Ascending aorta (tissue), 2 donors: ENCODE measurements at regions of chr14 and their contacts with region 1.

Region 1: GRCh38 chr14:34982417-34983147 is at the start of gene SRP54:
- DNase-seq: peak; percentile 93 to 99
- H3K4me3 ChIP-seq: peak within 1 kb of the TSS; percentile 79 to 91
- H3K27ac ChIP-seq: peak within 1 kb of the TSS; percentile 94 to 99
- H3K4me1 ChIP-seq: peaks cover 0 to 37% of the 10 kb centered on the region in 2 donors
- H3K27me3 ChIP-seq: no peaks in the 10 kb centered on the region
- CTCF ChIP-seq: no peak
- total RNA-seq, gene SRP54: 87.7 TPM

Region 2: DNA sequence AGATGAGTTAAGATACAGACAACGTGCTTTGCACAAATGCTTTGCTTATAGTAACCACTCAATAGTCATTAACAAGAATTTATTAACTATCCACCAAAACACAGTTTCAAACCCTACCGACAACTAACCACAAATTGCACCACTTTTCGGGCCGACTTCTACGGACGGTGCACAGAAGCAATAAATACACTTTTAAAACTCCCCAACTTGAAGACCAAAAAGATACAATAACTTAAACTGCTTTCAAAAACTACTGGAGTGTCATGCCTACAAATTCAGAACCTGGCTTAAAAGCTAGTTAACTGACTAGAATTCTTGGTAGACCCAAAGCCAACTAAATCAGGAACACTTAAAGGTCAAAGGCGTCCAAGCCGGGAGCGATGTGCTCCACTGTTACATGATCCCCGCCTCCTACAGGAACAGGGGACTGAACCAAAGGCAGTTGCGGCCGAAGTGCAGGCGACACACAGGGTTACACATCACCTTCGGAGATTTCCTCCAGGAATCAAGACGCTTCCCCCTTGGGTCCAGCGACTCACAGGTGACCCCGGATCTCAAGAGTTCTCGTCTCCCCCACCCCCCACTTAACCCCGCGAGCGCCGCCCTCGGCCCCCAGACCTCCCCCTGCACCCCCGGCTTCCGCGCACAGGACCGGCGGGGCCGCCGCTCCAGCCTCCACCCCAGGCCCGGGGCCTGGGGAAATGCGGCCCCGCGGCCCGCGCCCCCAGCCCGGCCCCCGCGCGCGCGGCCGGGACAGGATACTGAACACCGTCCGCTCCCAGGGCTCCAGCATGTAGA is 521.0 kb before region 1 on chr14:
- intact Hi-C with region 1: loop called (anchors 2 kb)
- DNase-seq: peak in 1 of 2 donors; percentile 77
- H3K4me3 ChIP-seq: peak overlapping the region; percentile 80 to 86
- H3K27ac ChIP-seq: peak overlapping the region; percentile 76 to 94
- H3K4me1 ChIP-seq: peaks cover 0 to 7% of the 10 kb centered on the region in 2 donors
- H3K27me3 ChIP-seq: no peaks in the 10 kb centered on the region
- CTCF ChIP-seq: no peak

Region 3: GRCh38 chr14:34629657-34630529 is 352.7 kb before region 1 on chr14 and contains the start of gene SNX6:
- intact Hi-C with region 1: loop called (anchors 5 kb)
- DNase-seq: peak; percentile 46 to 92
- H3K4me3 ChIP-seq: peak within 1 kb of the TSS; percentile 85 to 96
- H3K27ac ChIP-seq: peak within 1 kb of the TSS; percentile 87 to 94
- H3K4me1 ChIP-seq: peaks cover 5 to 6% of the 10 kb centered on the region in 2 donors
- H3K27me3 ChIP-seq: no peaks in the 10 kb centered on the region
- CTCF ChIP-seq: no peak
- total RNA-seq, gene SNX6: 25.3 TPM

Region 4: DNA sequence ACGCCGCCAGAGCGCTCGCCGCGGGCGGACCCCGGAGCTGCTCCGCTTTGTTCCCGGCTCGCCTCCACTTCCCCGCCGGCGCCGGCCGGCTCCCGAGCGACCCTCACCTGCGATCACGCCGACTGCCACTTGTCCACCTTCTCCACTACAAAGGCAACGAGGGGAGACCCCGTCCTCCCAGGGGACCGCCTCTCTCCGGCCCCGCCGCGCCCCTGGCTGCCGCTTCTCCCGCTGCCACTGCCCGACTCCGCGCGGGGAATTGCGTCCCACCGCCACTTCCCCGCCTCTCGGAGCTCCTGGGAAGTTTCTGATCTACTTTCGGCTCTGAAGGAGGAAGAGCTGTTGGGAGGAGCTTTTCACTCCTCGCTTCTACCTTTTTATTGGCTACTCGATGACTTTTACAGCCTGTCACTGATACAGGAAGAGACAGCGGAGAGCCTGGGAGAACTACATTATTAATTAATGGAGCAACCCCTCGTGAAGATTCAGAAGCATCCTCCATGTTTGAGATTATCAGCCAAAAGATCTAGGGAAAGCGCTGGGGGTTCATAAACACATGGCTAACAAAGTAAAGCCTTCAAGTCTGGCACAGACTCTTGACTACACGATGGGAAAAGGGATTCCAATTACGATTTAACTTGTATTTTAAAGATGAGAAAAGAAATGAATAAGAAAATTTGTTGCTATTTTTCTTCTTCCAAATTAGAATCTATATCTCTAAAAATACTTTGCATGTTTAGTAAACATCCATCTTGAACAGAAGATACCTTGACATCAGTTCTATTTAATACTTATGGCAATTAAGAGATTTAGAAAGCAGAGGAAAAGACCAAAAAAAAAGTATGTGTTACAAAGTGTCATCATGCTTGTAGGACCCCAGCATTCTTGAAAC is 107.3 kb before region 1 on chr14 and contains the start of gene BAZ1A:
- intact Hi-C with region 1: loop called (anchors 1 kb)
- DNase-seq: peak; percentile 13 to 80
- H3K4me3 ChIP-seq: peak within 1 kb of the TSS; percentile 73 to 100
- H3K27ac ChIP-seq: peak within 1 kb of the TSS; percentile 99 to 100
- H3K4me1 ChIP-seq: peaks cover 3 to 7% of the 10 kb centered on the region in 2 donors
- H3K27me3 ChIP-seq: no peaks in the 10 kb centered on the region
- CTCF ChIP-seq: peak in 2 of 3 experiments; percentile 35 to 51
- total RNA-seq, gene BAZ1A: 11.2 TPM

Region 5: GRCh38 chr14:34943506-34943905 is 39.1 kb before region 1 on chr14:
- intact Hi-C with region 1: no loop called
- DNase-seq: no peak
- H3K4me3 ChIP-seq: no peak overlapping the region
- H3K27ac ChIP-seq: no peak overlapping the region
- H3K4me1 ChIP-seq: no peaks in the 10 kb centered on the region
- H3K27me3 ChIP-seq: no peaks in the 10 kb centered on the region
- CTCF ChIP-seq: no peak

Region 6: DNA sequence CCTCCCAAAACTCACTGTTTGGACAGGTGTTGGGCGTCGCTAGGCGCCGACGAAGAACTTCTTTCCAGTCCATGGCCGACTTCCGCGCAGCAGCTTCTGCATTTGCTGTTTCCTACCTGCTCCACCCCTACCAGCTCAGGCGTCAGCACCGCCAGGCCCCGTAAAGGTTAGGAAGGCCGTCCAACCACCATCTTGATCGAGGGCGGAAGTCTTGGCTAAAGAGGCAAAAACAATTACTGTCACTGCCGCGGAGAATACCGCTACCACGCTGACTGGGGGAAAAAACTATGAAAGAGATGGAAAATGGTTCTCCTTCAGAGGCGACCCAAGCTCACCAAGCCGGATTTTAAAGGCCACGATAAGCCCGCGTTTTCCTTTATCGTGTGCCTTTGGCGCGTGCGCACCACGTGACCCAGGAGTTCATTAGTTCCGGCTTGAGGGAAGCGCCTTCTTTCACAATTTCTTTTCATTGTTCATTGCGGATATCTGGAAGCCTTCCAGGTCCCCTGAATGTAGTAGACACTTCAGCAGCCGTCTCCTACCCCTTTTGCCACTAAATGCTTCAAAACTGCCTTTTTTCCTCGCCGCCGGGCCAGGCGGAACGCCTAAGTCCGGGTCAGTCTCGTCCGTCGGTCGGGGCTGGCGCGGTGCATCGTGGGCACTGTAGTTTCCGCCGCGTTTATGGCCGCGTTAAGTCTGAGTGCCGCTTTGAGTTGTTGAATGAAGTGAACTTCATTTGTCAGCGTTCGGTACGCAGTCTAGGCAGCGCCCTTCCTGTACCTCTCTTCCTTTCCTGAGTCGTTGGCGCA is 139.5 kb after region 1 on chr14 and contains the starts of genes PPP2R3C and PRORP:
- intact Hi-C with region 1: loop called (anchors 1 kb)
- DNase-seq: peak; percentile 74 to 94
- H3K4me3 ChIP-seq: peak within 1 kb of the TSS; percentile 83 to 92
- H3K27ac ChIP-seq: peak within 1 kb of the TSS; percentile 91 to 98
- H3K4me1 ChIP-seq: peaks cover 3 to 18% of the 10 kb centered on the region in 2 donors
- H3K27me3 ChIP-seq: no peaks in the 10 kb centered on the region
- CTCF ChIP-seq: no peak
- total RNA-seq, gene PPP2R3C: 63.6 TPM
- total RNA-seq, gene PRORP: 42.5 TPM

Region 7: GRCh38 chr14:35133542-35134327 is 151.2 kb after region 1 on chr14:
- intact Hi-C with region 1: no loop called
- DNase-seq: no peak
- H3K4me3 ChIP-seq: no peak overlapping the region
- H3K27ac ChIP-seq: no peak overlapping the region
- H3K4me1 ChIP-seq: no peaks in the 10 kb centered on the region
- H3K27me3 ChIP-seq: no peaks in the 10 kb centered on the region
- CTCF ChIP-seq: no peak

Region 8: GRCh38 chr14:35197015-35197414 is 214.4 kb after region 1 on chr14:
- intact Hi-C with region 1: no loop called
- DNase-seq: no peak
- H3K4me3 ChIP-seq: no peak overlapping the region
- H3K27ac ChIP-seq: no peak overlapping the region
- H3K4me1 ChIP-seq: no peaks in the 10 kb centered on the region
- H3K27me3 ChIP-seq: no peaks in the 10 kb centered on the region
- CTCF ChIP-seq: no peak

Region 9: DNA sequence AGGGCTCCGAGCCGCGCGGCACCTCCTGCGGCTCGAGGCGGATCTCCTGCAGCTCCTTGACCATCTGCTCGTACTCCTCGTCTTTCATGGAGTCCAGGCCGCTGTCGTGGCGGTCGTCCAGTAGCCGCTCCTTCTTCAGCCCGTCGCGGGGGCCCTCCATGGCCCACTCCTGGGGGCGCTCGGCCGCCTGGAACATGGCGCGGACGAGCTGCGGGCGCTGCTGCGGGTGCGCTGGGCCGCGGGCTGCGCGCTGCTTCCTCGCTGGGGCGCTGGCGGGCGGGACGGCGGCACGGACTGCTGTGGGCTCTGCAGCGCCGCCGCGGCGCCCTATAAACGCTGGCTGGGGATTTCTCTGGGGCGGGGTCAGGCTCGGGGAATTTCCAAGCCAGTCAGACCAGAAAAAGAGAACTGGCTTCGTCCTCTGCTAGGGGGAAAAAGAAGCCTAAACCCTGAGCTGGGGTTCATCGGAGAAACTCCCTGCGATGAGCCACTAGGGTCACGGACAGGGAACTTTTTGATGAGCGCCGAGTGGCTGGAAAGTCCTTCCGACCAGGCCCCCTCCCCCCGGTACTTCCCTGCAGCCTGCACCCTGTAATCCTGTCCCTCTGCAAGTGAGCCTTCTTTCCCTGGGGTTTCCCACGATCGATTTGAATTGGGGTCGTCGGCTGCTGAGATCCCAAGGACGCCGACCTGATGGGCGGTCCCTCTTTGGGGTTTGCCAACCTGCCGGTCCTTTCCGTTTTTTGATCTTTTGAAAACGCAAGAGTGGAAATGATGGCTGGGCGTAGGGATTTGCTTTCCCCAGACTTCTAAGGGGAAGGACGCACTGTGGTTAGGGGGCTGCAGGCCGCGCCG is 422.1 kb after region 1 on chr14 and contains the start of gene NFKBIA:
- intact Hi-C with region 1: loop called (anchors 1 kb)
- DNase-seq: peak; percentile 51 to 95
- H3K4me3 ChIP-seq: peak within 1 kb of the TSS; percentile 80 to 94
- H3K27ac ChIP-seq: peak within 1 kb of the TSS; percentile 99
- H3K4me1 ChIP-seq: peaks cover 18 to 31% of the 10 kb centered on the region in 2 donors
- H3K27me3 ChIP-seq: no peaks in the 10 kb centered on the region
- CTCF ChIP-seq: peak in 1 of 3 experiments; percentile 10
- total RNA-seq, gene NFKBIA: 944 TPM